ENCODE measurements at regions of chr9 and their contacts with region 1.

Region 1: GRCh38 chr9:115138151-115138550 is 20.2 kb upstream of the TNC start:
- DNase-seq: no peak
- ATAC-seq: no peak
- H3K4me3 ChIP-seq: no peak overlapping the region
- H3K4me3 Mint-ChIP-seq: no peak overlapping the region
- H3K27ac ChIP-seq: no peak overlapping the region
- H3K27ac Mint-ChIP-seq: no peak overlapping the region
- H3K4me1 ChIP-seq: no peaks in the 10 kb centered on the region
- H3K4me1 Mint-ChIP-seq: peaks cover 0 to 26% (median 0%) of the 10 kb centered on the region in 7 donors
- H3K27me3 ChIP-seq: peaks cover 0 to 4% of the 10 kb centered on the region in 2 donors
- H3K27me3 Mint-ChIP-seq: peaks cover 36 to 63% (median 40%) of the 10 kb centered on the region in 5 donors

Region 2: DNA sequence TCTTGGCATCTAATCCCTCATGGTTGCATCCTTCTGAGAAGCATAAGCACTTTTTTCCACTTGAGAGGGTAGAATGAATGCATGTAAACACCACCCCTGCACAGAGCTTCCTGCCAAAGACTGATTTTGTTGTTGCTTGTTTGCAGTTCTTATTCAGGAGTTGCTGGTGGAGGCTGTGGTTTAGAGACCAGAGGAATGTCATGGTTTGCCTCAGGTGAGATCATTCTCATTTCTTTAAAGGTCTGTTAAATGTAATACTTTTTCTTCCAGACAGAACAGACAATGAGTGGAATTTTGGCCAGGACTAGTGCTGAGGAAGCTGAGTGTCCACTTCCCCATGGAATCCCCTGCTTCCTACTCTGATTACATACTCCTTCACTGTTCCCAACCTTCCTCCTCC is 17.0 kb before region 1 on chr9:
- CTCF ChIA-PET with region 1: no interaction called
- POLR2A ChIA-PET with region 1: no interaction called
- intact Hi-C with region 1: loop called in 1 of 2 experiments (anchors 2 kb)
- DNase-seq: no peak
- ATAC-seq: no peak
- H3K4me3 ChIP-seq: no peak overlapping the region
- H3K4me3 Mint-ChIP-seq: no peak overlapping the region
- H3K27ac ChIP-seq: no peak overlapping the region
- H3K27ac Mint-ChIP-seq: no peak overlapping the region
- H3K4me1 ChIP-seq: peaks cover 0 to 3% of the 10 kb centered on the region in 2 donors
- H3K4me1 Mint-ChIP-seq: peaks cover 0 to 10% (median 0%) of the 10 kb centered on the region in 7 donors
- H3K27me3 ChIP-seq: peaks cover 0 to 6% of the 10 kb centered on the region in 2 donors
- H3K27me3 Mint-ChIP-seq: peaks cover 70 to 79% (median 74%) of the 10 kb centered on the region in 5 donors